Right lobe of liver (tissue), 6 donors: ENCODE measurements at regions of chr2 and their contacts with region 1.

Region 1: DNA sequence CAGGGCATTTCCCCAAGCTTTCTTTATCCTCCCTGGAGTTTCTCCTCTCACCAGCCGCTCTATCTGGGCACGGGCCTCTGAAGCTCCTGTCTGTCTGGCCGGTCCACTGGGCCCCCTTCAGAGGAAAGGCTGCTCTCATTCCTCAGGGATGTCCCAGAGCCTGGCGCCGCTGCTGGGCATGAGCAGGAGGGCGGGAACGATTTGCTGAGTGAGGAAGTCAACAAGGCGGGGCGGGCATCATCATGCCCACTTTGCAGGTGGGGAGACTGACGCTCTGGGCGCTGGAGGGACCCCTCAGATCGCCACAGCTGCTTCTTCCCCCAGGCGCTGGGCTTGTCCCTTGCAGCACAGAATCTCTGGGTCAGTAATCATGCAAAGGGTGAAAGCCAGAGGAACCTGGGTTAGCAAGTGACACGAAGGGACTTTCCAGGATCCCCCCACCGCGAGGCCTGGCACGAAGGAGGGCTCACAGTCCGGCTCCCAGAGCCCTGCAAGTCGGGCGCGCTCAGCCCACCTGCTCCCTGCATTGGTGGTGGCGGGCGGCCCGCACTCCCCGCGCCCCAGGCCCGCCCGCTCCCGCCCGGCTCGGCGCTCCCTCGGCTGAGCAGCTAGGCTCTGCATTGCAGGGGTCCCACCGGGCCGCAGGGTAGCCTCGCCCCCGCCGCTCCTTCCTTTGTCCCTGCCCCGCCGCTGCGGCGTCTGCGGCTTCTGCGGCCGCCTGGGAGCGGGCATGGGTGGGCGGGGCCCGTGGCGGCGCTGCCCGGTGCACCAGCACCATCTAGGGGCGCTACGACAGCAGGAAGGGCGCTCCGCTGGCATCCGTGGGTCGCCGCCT is 157.8 kb downstream of the CYRIA start:
- DNase-seq: peak; percentile 64 to 68 (median 67)
- ATAC-seq: peak; percentile 79 to 86 (median 82)
- H3K4me3 ChIP-seq: peak overlapping the region; percentile 41 to 55 (median 47)
- H3K27ac ChIP-seq: no peak overlapping the region
- H3K4me1 ChIP-seq: peaks cover 0 to 31% (median 5%) of the 10 kb centered on the region in 4 donors
- H3K27me3 ChIP-seq: no peaks in the 10 kb centered on the region
- CTCF ChIP-seq: peak; percentile 77 to 92 (median 83)
- POLR2A ChIP-seq: no peak

Region 2: GRCh38 chr2:15636972-15637785 is 870.7 kb before region 1 on chr2:
- intact Hi-C with region 1: loop called in 1 of 2 experiments (anchors 10 kb)
- DNase-seq: peak in 1 of 3 donors; percentile 57
- ATAC-seq: peak; percentile 80 to 87 (median 85)
- H3K4me3 ChIP-seq: no peak overlapping the region
- H3K27ac ChIP-seq: no peak overlapping the region
- H3K4me1 ChIP-seq: peaks cover 0 to 25% (median 0%) of the 10 kb centered on the region in 4 donors
- H3K27me3 ChIP-seq: no peaks in the 10 kb centered on the region
- CTCF ChIP-seq: peak; percentile 81 to 89 (median 83)
- POLR2A ChIP-seq: no peak